ENCODE measurements at regions of chr1 and their contacts with region 1.

Region 1: GRCh38 chr1:179888071-179888470 is 6.0 kb downstream of the TOR1AIP1 start:
- DNase-seq: no peak
- H3K4me3 ChIP-seq: no peak overlapping the region
- H3K27ac ChIP-seq: no peak overlapping the region
- H3K4me1 ChIP-seq: peaks cover 0 to 60% (median 22%) of the 10 kb centered on the region in 3 donors
- H3K27me3 ChIP-seq: no peaks in the 10 kb centered on the region
- CTCF ChIP-seq: no peak
- POLR2A ChIP-seq: no peak

Region 2: GRCh38 chr1:179926494-179927205 is 38.6 kb after region 1 on chr1:
- intact Hi-C with region 1: no loop called
- DNase-seq: no peak
- H3K4me3 ChIP-seq: no peak overlapping the region
- H3K27ac ChIP-seq: no peak overlapping the region
- H3K4me1 ChIP-seq: no peaks in the 10 kb centered on the region
- H3K27me3 ChIP-seq: no peaks in the 10 kb centered on the region
- CTCF ChIP-seq: no peak
- POLR2A ChIP-seq: no peak

Region 3: GRCh38 chr1:179954493-179955297 is 66.6 kb after region 1 on chr1 and contains the start of gene CEP350:
- intact Hi-C with region 1: loop called (anchors 10 kb)
- DNase-seq: peak; percentile 90
- H3K4me3 ChIP-seq: peak within 1 kb of the TSS; percentile 65 to 95 (median 90)
- H3K27ac ChIP-seq: peak within 1 kb of the TSS; percentile 95 to 98 (median 96)
- H3K4me1 ChIP-seq: peaks cover 5 to 49% (median 18%) of the 10 kb centered on the region in 3 donors
- H3K27me3 ChIP-seq: no peaks in the 10 kb centered on the region
- CTCF ChIP-seq: peak in 1 of 6 experiments; percentile 17
- POLR2A ChIP-seq: peak in 3 of 4 donors; percentile 52 to 92 (median 73)
- total RNA-seq, gene CEP350: 31.1 to 66.9 (median 45.2) TPM

Measured in esophagus squamous epithelium (tissue), 5 donors.